Heart right ventricle (tissue), 16 donors: ENCODE measurements at regions of chr6 and their contacts with region 1.

Region 1: DNA sequence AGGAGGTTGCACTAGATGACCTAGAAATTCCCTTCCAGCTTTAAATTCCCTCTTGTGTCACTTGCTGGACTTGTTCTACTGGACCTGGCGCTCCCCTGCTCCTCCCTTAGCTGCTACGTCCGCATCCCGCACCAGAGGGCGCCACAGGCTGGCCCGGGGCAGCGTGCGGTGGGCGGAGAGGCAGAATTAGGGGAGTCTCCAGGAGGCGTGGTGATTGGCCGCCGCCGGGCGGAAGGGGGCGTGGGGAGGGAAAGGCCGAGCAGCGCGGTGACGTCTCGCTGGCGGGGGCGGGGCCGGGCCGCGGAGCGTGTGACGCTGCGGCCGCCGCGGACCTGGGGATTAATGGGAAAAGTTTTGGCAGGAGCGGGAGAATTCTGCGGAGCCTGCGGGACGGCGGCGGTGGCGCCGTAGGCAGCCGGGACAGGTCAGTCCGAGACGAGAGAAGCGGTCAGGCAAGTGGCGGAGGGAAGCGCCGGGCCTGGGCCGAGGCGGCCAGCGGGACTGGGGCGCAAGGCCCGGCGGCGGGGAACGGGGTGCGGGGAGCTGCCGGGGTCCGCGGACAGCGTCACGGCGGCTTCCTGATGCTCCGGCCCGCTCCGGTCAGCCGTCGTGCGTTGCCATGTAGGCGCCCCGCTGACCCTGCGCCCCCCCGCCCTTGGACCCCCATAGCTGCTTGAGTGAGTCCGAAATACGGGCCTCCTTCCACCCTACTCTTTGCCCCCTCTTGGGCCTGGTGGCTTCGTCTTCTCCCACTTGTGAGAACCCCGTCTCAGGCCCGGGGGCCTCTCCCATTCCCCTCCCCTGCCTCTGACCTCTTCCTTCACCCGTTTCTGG is at the start of gene PPARD:
- DNase-seq: peak; percentile 99
- ATAC-seq: peak; percentile 99 to 100 (median 100)
- H3K4me3 ChIP-seq: peak within 1 kb of the TSS; percentile 50 to 99 (median 94)
- H3K27ac ChIP-seq: peak within 1 kb of the TSS in 9 of 10 donors; percentile 81 to 96 (median 93)
- H3K4me1 ChIP-seq: peaks cover 0 to 29% (median 17%) of the 10 kb centered on the region in 9 donors
- H3K27me3 ChIP-seq: peaks cover 0 to 6% (median 0%) of the 10 kb centered on the region in 7 donors
- CTCF ChIP-seq: peak; percentile 97 to 99 (median 98)
- total RNA-seq, gene PPARD: 12.9 to 21.0 (median 13.9) TPM

Region 2: DNA sequence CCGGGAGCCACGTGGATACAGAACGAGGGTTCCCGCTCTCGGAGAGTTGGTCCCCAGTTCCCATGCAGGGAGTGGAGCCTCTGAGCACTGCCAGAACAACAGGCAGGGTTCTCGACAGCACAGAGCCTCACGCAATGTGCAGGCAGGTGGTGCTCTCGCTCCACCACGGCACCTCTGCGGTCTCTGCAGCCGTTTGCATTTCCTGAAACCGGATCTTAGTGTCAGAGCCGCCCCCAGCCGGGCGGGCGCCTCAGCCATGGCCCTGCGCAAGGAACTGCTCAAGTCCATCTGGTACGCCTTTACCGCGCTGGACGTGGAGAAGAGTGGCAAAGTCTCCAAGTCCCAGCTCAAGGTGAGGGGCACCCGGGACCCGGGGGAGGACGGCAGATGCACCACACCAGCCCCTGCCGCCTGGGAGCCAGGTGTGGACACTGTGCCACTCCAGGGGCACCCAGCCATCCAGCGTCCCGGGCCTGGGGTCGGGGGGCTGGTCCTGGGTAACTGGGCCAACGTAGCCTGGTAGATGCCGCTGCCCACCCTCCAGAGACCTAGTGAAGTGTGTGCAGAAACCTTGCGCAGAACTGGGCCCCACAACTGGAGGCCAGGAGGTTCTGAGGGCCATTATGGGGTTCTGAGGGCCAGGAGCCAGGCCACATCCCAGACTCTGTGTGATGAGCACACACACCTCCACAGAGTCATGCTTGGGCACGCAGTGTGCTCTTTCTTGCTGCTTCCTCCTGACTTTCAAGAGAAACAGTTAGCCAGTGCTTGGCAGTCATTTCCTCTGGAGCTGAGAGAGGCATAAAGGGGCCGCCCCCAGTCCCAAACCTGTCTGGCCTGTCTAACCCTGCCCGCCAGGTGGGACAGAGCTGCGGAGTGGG is 44.6 kb before region 1 on chr6 and contains the start of gene DEF6:
- intact Hi-C with region 1: loop called in 1 of 10 experiments (anchors 5 kb)
- DNase-seq: peak; percentile 73 to 75
- ATAC-seq: peak; percentile 85 to 93 (median 91)
- H3K4me3 ChIP-seq: peak within 1 kb of the TSS in 9 of 10 donors; percentile 16 to 68 (median 50)
- H3K27ac ChIP-seq: peak within 1 kb of the TSS in 8 of 10 donors; percentile 0 to 92 (median 48)
- H3K4me1 ChIP-seq: peaks cover 4 to 62% (median 24%) of the 10 kb centered on the region in 9 donors
- H3K27me3 ChIP-seq: no peaks in the 10 kb centered on the region
- CTCF ChIP-seq: peak; percentile 41 to 81 (median 67)
- total RNA-seq, gene DEF6: 0.62 to 8.8 (median 0.94) TPM

Region 3: GRCh38 chr6:35415065-35415991 is 72.9 kb after region 1 on chr6:
- intact Hi-C with region 1: loop called in 6 of 10 experiments (anchors 1 to 10 kb)
- DNase-seq: peak; percentile 58 to 78
- ATAC-seq: peak; percentile 71 to 91 (median 82)
- H3K4me3 ChIP-seq: no peak overlapping the region
- H3K27ac ChIP-seq: no peak overlapping the region
- H3K4me1 ChIP-seq: peaks cover 0 to 33% (median 16%) of the 10 kb centered on the region in 9 donors
- H3K27me3 ChIP-seq: no peaks in the 10 kb centered on the region
- CTCF ChIP-seq: peak; percentile 21 to 77 (median 58)

Region 4: DNA sequence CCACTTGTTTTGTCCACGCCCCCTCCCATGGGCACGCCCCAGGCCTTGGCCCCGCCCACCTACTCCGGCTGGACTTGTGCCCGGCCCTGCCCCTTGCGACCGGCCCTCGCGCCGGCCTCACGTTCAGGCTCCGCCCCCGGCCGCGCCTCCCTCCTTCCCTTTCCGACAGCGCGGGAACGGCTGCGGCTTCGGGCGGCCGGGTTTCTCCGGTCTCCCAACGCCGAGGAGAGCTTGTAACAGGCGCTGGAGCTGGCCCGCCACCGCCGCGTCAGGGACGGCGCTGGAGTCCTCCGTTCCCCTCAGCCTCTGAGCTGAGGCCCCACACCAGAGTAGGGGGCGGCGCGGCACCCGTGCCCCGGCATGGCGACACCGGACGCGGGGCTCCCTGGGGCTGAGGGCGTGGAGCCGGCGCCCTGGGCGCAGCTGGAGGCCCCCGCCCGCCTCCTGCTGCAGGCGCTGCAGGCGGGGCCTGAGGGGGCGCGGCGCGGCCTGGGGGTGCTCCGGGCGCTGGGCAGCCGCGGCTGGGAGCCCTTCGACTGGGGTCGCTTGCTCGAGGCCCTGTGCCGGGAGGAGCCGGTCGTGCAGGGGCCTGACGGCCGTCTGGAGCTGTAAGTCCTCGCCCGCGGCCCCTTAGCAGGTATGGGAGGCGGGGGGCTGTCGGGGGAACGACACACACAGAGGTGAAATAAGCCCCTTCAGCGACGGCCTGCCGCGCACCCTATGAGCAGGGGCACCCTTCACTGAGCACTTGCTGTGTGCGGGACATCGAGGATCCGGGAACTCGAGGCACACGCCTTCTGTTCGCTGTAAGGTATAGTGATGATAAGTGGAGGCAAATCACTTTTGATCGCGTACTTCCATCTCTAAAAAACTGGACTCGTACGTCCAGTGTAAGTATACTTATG is 110.0 kb after region 1 on chr6 and contains the start of gene FANCE:
- intact Hi-C with region 1: loop called (anchors 1 to 5 kb)
- DNase-seq: peak; percentile 94 to 97
- ATAC-seq: peak; percentile 95 to 98 (median 96)
- H3K4me3 ChIP-seq: peak within 1 kb of the TSS; percentile 2 to 79 (median 66)
- H3K27ac ChIP-seq: peak within 1 kb of the TSS; percentile 14 to 86 (median 74)
- H3K4me1 ChIP-seq: peaks cover 3 to 44% (median 29%) of the 10 kb centered on the region in 9 donors
- H3K27me3 ChIP-seq: no peaks in the 10 kb centered on the region
- CTCF ChIP-seq: no peak
- total RNA-seq, gene FANCE: 1.5 to 5.3 (median 3.0) TPM

Region 5: GRCh38 chr6:35468181-35468979 is 125.9 kb after region 1 on chr6 and contains the start of gene RPL10A:
- intact Hi-C with region 1: loop called in 6 of 10 experiments (anchors 1 to 5 kb)
- DNase-seq: peak; percentile 92 to 97
- ATAC-seq: peak; percentile 87 to 95 (median 93)
- H3K4me3 ChIP-seq: peak within 1 kb of the TSS; percentile 68 to 87 (median 82)
- H3K27ac ChIP-seq: peak within 1 kb of the TSS; percentile 44 to 93 (median 89)
- H3K4me1 ChIP-seq: peaks cover 4 to 46% (median 40%) of the 10 kb centered on the region in 9 donors
- H3K27me3 ChIP-seq: no peaks in the 10 kb centered on the region
- CTCF ChIP-seq: peak; percentile 94 to 99 (median 97)
- total RNA-seq, gene RPL10A: 476 to 650 (median 529) TPM

Region 6: DNA sequence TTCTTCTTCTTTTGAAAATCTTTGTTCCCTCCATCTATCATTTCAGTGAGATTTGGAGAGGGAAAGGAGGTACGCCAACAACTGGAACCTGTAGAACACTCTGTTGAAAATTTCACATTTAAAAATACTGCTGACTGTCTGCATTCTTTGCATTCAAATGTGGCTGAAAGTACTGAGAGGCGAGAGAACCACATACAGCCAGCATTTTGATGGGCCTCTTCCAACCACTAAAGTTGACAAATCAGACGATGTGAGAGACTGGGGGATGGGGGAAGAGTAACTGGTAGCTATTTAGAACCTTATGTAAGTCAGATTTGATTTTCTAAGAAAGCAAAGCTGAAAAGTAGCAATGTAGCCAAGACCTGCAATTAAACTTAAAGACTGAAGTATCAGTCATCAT is 268.8 kb after region 1 on chr6:
- intact Hi-C with region 1: no loop called
- DNase-seq: no peak
- ATAC-seq: peak in 1 of 8 donors; percentile 29
- H3K4me3 ChIP-seq: no peak overlapping the region
- H3K27ac ChIP-seq: peak overlapping the region in 3 of 10 donors; percentile 0 to 47 (median 38)
- H3K4me1 ChIP-seq: peaks cover 0 to 48% (median 0%) of the 10 kb centered on the region in 9 donors
- H3K27me3 ChIP-seq: no peaks in the 10 kb centered on the region
- CTCF ChIP-seq: no peak